Common myeloid progenitor, CD34-positive (primary cell): ENCODE measurements at regions of chr11 and their contacts with region 1.

Region 1: DNA sequence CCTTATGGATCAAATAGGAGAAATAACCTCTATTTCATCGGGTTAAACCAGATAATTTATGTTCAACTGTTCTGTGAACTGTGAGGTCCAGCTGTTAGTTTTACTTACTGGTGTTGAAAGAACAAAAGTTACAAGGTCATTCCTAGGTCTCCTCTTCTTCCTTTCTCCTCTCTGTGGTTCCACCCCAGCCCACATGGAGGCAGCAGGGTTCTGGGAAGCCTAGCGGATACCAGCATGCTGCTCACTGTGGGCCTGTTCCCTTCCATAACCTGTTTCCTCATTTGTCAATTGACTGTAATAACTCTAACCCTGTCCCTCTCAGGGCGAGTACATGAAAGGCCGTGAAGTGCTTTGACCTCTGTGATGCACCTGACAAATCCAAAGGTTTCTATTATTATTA is 27.8 kb downstream of the RELT start:
- DNase-seq: peak; percentile 58 to 80 (median 77)
- H3K4me3 ChIP-seq: no peak overlapping the region
- H3K27ac ChIP-seq: no peak overlapping the region
- H3K4me1 ChIP-seq: peaks cover 0 to 5% (median 1%) of the 10 kb centered on the region in 4 experiments
- H3K27me3 ChIP-seq: no peaks in the 10 kb centered on the region

Region 2: DNA sequence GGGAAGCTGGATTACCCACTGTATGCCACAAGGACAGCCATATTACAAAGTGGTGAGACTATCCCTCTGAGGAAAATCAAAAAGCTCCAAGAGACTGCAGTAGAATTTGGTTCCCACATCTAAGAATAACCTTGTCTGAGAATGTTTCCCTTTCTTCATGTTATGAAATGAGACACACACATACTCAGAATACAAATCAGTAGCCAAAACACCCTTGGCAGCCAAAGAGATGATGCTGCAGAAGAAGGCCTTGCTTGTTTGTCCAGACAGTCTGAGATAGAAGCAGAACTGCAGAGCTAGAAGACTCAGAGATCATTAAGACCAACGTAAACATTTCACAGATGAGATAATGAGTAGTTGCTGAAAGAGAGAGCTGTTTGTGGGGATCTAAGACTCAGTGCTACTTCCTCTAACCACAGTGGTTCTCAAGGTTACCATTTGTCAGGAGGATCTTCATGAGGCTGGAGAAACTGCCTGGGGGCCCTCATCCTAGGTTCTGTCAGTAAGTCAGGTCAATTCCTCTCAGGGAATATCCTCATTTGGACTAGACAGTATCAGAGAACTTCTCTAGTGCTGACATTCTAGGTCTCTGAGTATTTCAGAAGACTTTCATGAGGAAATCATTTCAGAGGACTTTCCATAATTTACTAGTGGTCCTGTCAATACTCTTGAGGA is 11.1 kb after region 1 on chr11:
- CTCF ChIA-PET with region 1: interaction called, 25 read pairs
- POLR2A ChIA-PET with region 1: no interaction called
- DNase-seq: peak in 2 of 3 donors; percentile 38 to 46
- H3K4me3 ChIP-seq: no peak overlapping the region
- H3K27ac ChIP-seq: no peak overlapping the region
- H3K4me1 ChIP-seq: peaks cover 6 to 17% (median 8%) of the 10 kb centered on the region in 4 experiments
- H3K27me3 ChIP-seq: no peaks in the 10 kb centered on the region